Activated CD4-positive, alpha-beta T cell treated with anti-CD3 and anti-CD28 coated beads for 36 hours (primary cell): ENCODE measurements at regions of chr15 and their contacts with region 1.

Region 1: DNA sequence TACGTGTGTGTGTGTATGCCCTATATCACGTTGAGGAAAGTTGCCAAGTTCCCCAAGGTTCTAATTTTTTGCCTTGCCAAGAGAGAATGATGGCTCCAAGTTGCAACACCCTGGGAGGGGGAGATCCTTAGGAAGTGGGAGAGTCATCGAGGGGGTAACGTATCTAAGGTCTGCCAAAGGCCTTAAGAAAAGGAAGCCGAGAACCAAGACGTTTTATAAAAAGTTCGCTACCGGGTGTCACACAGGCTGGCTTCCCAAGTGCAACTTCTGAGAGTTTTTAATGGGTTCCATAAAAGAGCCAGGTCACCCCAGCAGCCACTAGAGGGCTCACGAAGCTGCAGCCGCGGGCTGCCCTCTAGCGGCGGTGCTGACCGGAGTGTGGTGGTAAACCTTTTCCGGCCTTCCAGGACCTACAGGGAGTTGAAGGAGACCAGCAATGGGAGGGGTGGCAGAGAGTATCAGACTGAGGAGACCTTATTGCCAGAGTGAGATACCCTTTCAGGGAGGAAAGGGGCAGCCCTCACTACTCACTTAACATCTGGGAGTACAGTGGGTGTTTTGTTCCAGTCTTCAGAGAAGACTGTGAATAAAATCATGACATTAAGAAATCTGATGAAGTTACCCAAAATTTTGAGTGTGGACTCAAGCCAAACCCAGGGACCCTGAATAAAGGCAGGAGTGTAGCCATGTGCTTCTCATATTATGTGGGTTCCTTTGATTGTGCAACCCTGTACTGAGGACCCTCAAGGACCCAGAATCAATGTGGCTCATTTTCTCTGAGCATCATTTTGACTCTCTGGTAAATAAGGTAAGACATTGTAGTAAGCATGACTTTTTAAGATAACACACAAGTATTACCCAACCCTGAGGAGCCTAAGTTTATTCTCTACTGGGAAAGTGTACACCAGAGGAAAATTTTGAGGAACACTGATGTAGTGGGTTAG is 2.5 kb upstream of the RFX7 start:
- DNase-seq: peak; percentile 94
- ATAC-seq: peak; percentile 66
- H3K4me3 Mint-ChIP-seq: peak overlapping the region; percentile 80
- H3K27ac Mint-ChIP-seq: peak overlapping the region; percentile 96
- H3K4me1 Mint-ChIP-seq: peaks cover 20% of the 10 kb centered on the region
- H3K27me3 Mint-ChIP-seq: no peaks in the 10 kb centered on the region

Region 2: GRCh38 chr15:55649054-55649423 is 597.1 kb before region 1 on chr15:
- CTCF ChIA-PET with region 1: no interaction called
- POLR2A ChIA-PET with region 1: no interaction called
- intact Hi-C with region 1: loop called in 1 of 2 experiments (anchors 1 kb)
- DNase-seq: no peak
- ATAC-seq: no peak
- H3K4me3 Mint-ChIP-seq: no peak overlapping the region
- H3K27ac Mint-ChIP-seq: no peak overlapping the region
- H3K4me1 Mint-ChIP-seq: peaks cover 4% of the 10 kb centered on the region
- H3K27me3 Mint-ChIP-seq: peaks cover 2% of the 10 kb centered on the region

Region 3: DNA sequence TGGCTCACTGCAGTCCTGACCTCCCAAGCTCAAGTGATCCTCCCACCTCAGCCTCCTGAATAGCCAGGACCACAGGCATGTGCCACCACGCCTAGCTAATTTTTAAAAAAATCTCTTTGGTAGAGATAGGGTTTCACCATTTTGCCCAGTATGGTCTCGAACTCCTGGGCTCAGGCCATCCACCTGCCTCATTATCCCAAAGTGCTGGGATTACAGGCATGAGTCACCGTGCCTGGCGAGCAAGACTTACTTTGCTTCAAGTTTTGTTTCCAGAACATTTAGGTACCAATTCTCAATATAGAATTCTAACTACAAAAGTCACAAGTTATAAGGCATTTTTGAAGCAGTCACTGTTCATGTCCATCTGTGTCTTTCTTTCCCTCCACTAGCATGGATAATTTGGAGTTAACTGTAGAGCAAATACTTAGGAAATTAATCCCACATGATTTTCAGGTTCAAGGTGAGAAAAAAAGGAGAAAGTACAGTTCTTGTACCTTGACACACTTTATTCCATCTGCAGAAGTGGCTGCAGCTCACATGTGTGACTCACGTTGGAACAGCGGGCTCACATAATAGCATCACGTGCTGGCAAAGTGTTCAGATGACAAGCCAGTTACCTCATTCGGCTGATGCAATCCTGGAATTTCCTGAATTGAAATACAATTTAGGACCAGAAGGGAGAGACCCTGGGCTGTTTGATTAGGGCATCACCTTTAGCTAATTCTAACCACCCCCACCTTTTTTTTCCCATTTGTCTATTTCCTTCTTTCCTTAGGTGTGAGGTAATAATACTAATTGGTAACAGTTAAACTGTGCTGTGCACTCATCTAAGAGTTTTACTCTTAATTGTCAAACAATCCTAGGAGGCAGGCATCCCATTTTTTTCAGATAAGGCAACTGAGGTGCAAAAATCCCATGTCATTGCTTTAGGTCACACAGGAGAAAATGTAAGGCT is 205.8 kb before region 1 on chr15:
- CTCF ChIA-PET with region 1: no interaction called
- POLR2A ChIA-PET with region 1: interaction called, 3 read pairs
- intact Hi-C with region 1: loop called (anchors 2 to 5 kb)
- DNase-seq: peak; percentile 63
- ATAC-seq: peak; percentile 31
- H3K4me3 Mint-ChIP-seq: no peak overlapping the region
- H3K27ac Mint-ChIP-seq: peak overlapping the region; percentile 87
- H3K4me1 Mint-ChIP-seq: peaks cover 61% of the 10 kb centered on the region
- H3K27me3 Mint-ChIP-seq: no peaks in the 10 kb centered on the region

Region 4: DNA sequence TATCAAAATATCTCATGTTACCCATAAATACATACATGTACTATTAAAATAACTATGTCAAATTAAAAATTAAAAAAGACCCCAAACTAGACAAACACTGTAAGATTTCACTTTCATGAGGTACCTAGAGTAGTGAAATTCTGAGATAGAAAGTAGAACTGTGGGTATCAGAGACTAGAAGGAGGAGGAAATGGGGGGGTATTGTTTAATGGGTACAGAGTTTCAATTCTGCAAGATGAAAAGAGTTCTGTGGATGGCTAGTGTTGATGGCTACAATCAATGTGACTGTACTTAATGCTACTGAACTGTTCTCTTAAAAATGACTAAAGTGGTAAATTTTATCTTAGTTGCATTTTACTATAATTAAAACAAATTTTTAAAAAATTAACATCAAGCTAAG is 39.1 kb before region 1 on chr15:
- CTCF ChIA-PET with region 1: interaction called, 8 read pairs
- POLR2A ChIA-PET with region 1: no interaction called
- intact Hi-C with region 1: loop called in 1 of 2 experiments (anchors 5 kb)
- DNase-seq: no peak
- ATAC-seq: peak; percentile 57
- H3K4me3 Mint-ChIP-seq: no peak overlapping the region
- H3K27ac Mint-ChIP-seq: no peak overlapping the region
- H3K4me1 Mint-ChIP-seq: peaks cover 80% of the 10 kb centered on the region
- H3K27me3 Mint-ChIP-seq: no peaks in the 10 kb centered on the region

Region 5: GRCh38 chr15:56428821-56429458 is 182.8 kb after region 1 on chr15:
- CTCF ChIA-PET with region 1: interaction called, 6 read pairs
- POLR2A ChIA-PET with region 1: no interaction called
- intact Hi-C with region 1: loop called (anchors 1 kb)
- DNase-seq: no peak
- ATAC-seq: no peak
- H3K4me3 Mint-ChIP-seq: no peak overlapping the region
- H3K27ac Mint-ChIP-seq: no peak overlapping the region
- H3K4me1 Mint-ChIP-seq: no peaks in the 10 kb centered on the region
- H3K27me3 Mint-ChIP-seq: peaks cover 3% of the 10 kb centered on the region

Region 6: GRCh38 chr15:56786966-56787365 is 540.8 kb after region 1 on chr15:
- CTCF ChIA-PET with region 1: no interaction called
- POLR2A ChIA-PET with region 1: no interaction called
- intact Hi-C with region 1: loop called in 1 of 2 experiments (anchors 10 kb)
- DNase-seq: no peak
- ATAC-seq: peak; percentile 96
- H3K4me3 Mint-ChIP-seq: no peak overlapping the region
- H3K27ac Mint-ChIP-seq: peak overlapping the region; percentile 29
- H3K4me1 Mint-ChIP-seq: peaks cover 14% of the 10 kb centered on the region
- H3K27me3 Mint-ChIP-seq: peaks cover 3% of the 10 kb centered on the region

Region 7: DNA sequence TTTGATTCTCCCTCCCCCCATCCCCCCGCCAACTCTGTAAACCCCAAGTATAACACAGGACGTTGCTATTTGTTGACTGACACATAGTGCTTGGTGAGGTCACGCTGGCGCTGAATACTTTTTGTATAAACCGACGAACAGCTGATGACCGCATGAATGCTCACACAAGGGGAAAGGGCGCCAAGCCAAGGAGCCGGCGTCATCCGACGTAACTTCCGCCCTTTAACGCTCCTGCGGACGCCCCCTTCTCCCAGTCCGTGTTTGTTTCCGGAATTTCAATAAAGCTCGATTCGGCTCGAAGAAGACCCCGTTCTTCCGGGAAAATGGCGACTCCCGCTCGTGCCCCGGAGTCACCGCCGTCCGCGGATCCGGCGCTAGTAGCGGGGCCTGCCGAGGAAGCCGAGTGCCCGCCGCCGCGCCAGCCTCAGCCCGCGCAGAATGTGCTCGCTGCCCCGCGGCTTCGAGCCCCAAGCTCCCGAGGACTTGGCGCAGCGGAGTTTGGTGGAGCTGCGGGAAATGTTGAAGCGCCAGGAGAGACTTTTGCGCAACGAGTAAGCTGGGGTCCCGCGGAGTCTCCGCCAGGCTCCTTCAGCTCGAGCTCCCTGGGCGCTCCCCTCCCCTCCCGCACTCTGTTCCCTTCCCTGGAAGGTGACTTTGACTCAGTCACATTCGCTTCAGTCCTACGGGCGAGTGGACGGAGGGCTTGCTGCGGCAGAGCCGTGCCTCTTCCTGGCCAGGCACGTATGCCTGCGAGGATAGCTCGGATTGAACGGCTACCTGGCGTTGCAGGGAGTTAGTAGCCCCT is 1460.5 kb after region 1 on chr15 and contains the start of gene POLR2M:
- CTCF ChIA-PET with region 1: no interaction called
- POLR2A ChIA-PET with region 1: no interaction called
- intact Hi-C with region 1: loop called in 1 of 2 experiments (anchors 2 kb)
- DNase-seq: peak; percentile 96
- ATAC-seq: peak; percentile 94
- H3K4me3 Mint-ChIP-seq: peak within 1 kb of the TSS; percentile 90
- H3K27ac Mint-ChIP-seq: peak within 1 kb of the TSS; percentile 95
- H3K4me1 Mint-ChIP-seq: peaks cover 70% of the 10 kb centered on the region
- H3K27me3 Mint-ChIP-seq: no peaks in the 10 kb centered on the region
- total RNA-seq, gene POLR2M: 76.1 to 87.2 TPM

Region 8: DNA sequence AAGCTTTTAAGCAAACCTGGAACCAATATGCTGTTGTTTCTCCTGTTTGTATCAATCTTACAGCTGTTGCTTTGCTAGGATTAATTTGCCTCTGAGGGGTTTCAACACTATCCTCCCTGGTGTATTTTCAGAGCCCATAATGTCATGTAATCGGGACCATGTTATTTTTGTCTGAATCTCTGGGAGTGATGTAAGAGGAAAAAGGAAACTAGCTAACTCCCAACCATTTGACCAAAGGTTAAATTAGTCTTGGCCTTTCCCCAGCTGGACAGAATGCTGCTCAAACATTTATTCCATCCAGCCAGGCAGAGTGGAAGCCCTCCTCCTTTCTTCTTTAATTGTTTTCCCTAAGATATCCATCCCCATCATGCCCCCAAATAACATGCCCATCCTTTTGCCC is 1677.2 kb after region 1 on chr15:
- CTCF ChIA-PET with region 1: no interaction called
- POLR2A ChIA-PET with region 1: no interaction called
- intact Hi-C with region 1: no loop called
- DNase-seq: no peak
- ATAC-seq: no peak
- H3K4me3 Mint-ChIP-seq: no peak overlapping the region
- H3K27ac Mint-ChIP-seq: no peak overlapping the region
- H3K4me1 Mint-ChIP-seq: no peaks in the 10 kb centered on the region
- H3K27me3 Mint-ChIP-seq: peaks cover 15% of the 10 kb centered on the region